SK-N-SH (cell line): ENCODE measurements at regions of chr11 and their contacts with region 1.

Region 1: DNA sequence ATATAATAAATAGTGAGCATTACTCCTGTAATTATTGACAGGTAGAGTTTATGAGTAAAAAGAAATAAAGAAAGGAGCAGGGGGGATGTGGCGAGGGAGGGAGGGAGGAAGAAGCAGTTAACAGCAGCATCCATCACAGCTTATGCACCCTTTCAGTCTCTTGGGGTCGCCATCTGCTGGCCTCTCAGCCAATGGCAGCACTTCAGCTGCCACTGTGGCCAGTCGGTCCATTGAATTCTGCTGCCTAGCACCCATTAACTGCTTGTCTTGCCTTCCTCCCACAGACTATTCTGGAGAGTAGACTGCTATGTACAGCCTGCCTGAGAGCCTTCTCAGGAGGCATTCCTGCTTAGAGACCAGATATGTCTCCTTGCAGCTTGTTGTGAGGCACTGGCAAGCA is 388.3 kb downstream of the TENM4 start:
- DNase-seq: no peak
- H3K4me3 ChIP-seq: no peak overlapping the region
- H3K27ac ChIP-seq: peak overlapping the region in 1 of 2 experiments; percentile 24; a peak in 1 of 4 replicates
- H3K4me1 ChIP-seq: peaks cover 0 to 38% of the 10 kb centered on the region in 2 experiments; a peak in 2 of 4 replicates
- H3K27me3 ChIP-seq: no peaks in the 10 kb centered on the region
- CTCF ChIP-seq: peak; percentile 50
- EP300 ChIP-seq: no peak
- RAD21 ChIP-seq: peak; percentile 53

Region 2: DNA sequence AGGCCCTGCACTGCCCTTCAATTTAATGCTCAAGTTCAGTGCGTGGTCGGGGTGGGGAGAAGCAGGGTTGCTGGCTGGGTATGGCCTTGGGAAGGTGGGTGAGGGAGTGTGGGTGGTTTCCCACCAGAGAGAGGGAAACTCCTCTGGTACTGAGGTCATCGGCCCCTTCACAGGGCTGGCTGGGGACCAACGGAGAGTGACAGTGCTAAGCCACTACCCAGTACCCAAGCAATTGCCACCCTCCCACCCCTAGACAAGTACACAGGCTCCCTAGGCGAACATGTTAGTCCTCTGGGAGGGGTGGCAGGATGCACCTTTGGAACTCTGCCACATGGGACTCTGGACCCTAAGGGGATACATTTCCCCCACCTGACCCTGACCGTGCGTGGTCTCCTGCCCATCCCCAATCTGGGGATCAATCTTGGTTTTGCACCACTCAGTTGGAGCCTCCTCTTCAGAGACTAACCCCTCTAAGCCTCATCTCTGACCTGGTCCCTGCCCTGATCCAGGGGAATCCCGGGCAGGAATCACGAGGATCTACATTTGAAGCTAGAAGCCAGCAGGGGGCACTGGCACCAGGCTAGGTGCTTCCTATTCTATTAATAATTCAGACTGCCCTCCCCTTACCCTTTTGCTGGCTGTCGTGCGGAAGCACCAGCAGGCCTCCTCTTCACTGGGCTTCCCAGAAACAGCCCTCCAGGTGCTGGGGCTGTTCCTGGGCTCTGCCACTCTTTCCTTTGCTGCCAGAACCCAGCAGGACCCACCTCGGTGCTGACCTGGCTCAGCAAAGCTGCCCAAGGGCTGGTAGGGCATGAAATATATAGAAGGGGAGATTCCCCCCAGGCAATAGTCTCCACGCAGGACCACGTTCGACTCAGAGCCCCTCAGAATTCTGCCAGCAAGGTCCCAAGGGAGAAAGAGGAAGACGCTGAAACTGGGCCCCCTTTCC is 10.5 kb after region 1 on chr11:
- CTCF ChIA-PET with region 1: interaction called, 25 read pairs
- POLR2A ChIA-PET with region 1: no interaction called
- DNase-seq: peak; percentile 73
- H3K4me3 ChIP-seq: no peak overlapping the region; a peak in 1 of 4 replicates
- H3K27ac ChIP-seq: peak overlapping the region in 1 of 2 experiments; percentile 73; a peak in 2 of 4 replicates
- H3K4me1 ChIP-seq: peaks cover 6 to 63% of the 10 kb centered on the region in 2 experiments; a peak in 3 of 4 replicates
- H3K27me3 ChIP-seq: no peaks in the 10 kb centered on the region
- CTCF ChIP-seq: peak; percentile 70
- EP300 ChIP-seq: peak in 1 of 2 experiments; percentile 21; a peak in 1 of 4 replicates
- RAD21 ChIP-seq: peak; percentile 72

Region 3: DNA sequence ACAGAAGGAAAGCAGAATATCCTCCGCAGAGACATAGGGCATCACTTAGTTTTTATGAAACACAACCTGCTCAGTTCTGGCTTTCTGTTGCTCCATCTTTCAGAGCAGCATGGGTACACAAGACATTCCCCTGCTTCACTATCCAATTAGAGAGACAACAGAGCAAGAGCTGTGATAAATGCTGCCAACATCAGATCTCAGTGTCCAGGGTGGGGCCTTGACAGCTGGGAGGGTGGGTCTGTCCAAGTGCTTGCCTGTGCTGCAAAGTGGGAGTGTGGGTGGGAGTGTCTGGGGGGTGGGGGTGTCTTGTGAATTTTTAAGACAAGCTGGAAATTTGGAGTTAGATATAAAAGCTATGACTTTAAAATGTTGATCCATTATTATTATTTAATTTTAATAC is 18.6 kb after region 1 on chr11:
- CTCF ChIA-PET with region 1: interaction called, 16 read pairs
- POLR2A ChIA-PET with region 1: no interaction called
- DNase-seq: no peak
- H3K4me3 ChIP-seq: no peak overlapping the region
- H3K27ac ChIP-seq: no peak overlapping the region; a peak in 1 of 4 replicates
- H3K4me1 ChIP-seq: peaks cover 0 to 67% of the 10 kb centered on the region in 2 experiments; a peak in 3 of 4 replicates
- H3K27me3 ChIP-seq: no peaks in the 10 kb centered on the region
- CTCF ChIP-seq: no peak
- EP300 ChIP-seq: no peak
- RAD21 ChIP-seq: no peak